Caco-2 (cell line): ENCODE measurements at regions of chr6 and their contacts with region 1.

Region 1: GRCh38 chr6:17178754-17179529 is 77.1 kb downstream of the STMND1 start:
- DNase-seq: no peak
- H3K4me3 ChIP-seq: no peak overlapping the region
- H3K4me3 Mint-ChIP-seq: no peak overlapping the region
- H3K27ac Mint-ChIP-seq: no peak overlapping the region
- H3K4me1 ChIP-seq: no peaks in the 10 kb centered on the region
- H3K4me1 Mint-ChIP-seq: no peaks in the 10 kb centered on the region
- H3K27me3 ChIP-seq: no peaks in the 10 kb centered on the region
- H3K27me3 Mint-ChIP-seq: peaks cover 13% of the 10 kb centered on the region
- CTCF ChIP-seq: no peak

Region 2: GRCh38 chr6:17145162-17145561 is 33.8 kb before region 1 on chr6:
- CTCF ChIA-PET with region 1: no interaction called
- POLR2A ChIA-PET with region 1: no interaction called
- intact Hi-C with region 1: loop called (anchors 1 kb)
- DNase-seq: no peak
- H3K4me3 ChIP-seq: no peak overlapping the region
- H3K4me3 Mint-ChIP-seq: no peak overlapping the region
- H3K27ac Mint-ChIP-seq: no peak overlapping the region
- H3K4me1 ChIP-seq: no peaks in the 10 kb centered on the region
- H3K4me1 Mint-ChIP-seq: no peaks in the 10 kb centered on the region
- H3K27me3 ChIP-seq: no peaks in the 10 kb centered on the region
- H3K27me3 Mint-ChIP-seq: no peaks in the 10 kb centered on the region
- CTCF ChIP-seq: no peak

Region 3: DNA sequence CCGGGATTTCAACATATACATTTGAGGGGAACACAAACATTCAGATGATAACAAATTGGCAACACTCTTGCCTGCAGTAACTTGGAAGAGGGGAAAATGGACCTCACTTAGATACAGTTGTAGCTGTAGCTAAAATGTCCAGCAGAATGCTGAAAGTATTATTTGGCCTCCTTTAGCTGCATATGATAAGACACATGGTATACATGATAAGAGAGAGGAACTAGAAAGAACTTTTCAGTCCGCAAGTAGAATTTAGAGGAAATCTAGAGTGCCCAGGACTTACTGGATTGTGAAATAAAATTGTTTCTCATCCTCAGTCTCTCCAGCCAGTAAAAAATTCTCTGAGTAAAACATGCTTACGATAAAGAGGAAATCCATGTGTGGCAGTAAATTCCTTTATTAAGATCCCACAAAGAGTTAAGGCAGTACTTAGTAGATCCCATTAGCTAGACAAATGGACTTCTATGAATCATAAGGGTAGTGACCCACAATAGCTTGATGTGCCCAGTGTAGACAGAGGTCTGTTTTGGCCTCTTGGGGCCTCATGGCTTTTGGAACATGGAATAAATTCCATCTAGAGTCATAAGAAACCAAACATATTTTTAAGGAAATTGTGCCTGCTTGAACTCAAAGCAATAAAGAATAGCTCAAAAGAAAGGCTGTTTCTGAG is 14.3 kb after region 1 on chr6:
- CTCF ChIA-PET with region 1: no interaction called
- POLR2A ChIA-PET with region 1: no interaction called
- intact Hi-C with region 1: no loop called
- DNase-seq: no peak
- H3K4me3 ChIP-seq: no peak overlapping the region
- H3K4me3 Mint-ChIP-seq: no peak overlapping the region
- H3K27ac Mint-ChIP-seq: no peak overlapping the region
- H3K4me1 ChIP-seq: no peaks in the 10 kb centered on the region
- H3K4me1 Mint-ChIP-seq: no peaks in the 10 kb centered on the region
- H3K27me3 ChIP-seq: no peaks in the 10 kb centered on the region
- H3K27me3 Mint-ChIP-seq: peaks cover 10% of the 10 kb centered on the region
- CTCF ChIP-seq: no peak